ENCODE measurements at regions of chr22 and their contacts with region 1.

Region 1: DNA sequence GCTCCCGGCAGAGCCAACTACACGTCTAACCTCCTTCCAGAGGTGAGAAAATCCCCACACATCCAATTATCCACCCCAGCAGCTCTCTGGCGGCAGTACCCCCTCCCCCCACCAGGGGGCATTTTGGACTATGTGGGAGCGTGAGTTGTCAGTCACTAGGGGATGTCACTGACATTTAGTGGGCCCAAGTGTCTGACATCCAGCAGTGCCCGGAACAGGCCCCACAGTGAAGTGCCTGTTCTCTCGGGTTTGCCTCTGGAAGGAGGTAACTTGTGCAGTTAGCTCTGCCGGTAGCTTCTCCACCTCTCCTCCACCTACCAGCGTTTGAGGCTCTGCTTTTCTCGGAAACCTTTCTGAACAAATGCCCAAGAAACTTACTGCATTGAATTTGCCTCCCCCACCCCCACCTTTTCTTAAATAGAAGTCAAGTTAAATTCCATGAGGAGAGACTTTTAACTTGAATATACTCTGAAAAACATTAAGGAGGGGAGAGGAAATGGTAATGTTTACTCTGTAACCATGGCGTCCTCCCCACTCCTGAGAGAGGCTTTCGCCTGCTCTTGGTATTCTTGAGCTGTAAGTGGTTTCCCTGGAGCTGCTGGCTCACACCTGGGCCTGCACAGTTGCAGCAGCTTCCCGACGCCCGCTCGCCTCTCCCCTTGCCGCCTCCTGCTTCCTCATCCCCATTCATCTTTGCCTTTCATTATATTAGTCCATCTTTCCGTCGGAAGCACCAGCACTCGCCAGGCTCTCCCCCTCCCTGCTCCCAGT is 112.8 kb downstream of the WNT7B start:
- DNase-seq: peak; percentile 64 to 86
- H3K4me3 ChIP-seq: no peak overlapping the region
- H3K4me3 Mint-ChIP-seq: no peak overlapping the region
- H3K27ac Mint-ChIP-seq: no peak overlapping the region
- H3K4me1 ChIP-seq: no peaks in the 10 kb centered on the region
- H3K4me1 Mint-ChIP-seq: no peaks in the 10 kb centered on the region
- H3K27me3 ChIP-seq: no peaks in the 10 kb centered on the region; the same call in 1 of the 2 replicates
- H3K27me3 Mint-ChIP-seq: peaks cover 17% of the 10 kb centered on the region
- CTCF ChIP-seq: peak; percentile 89 to 90

Region 2: DNA sequence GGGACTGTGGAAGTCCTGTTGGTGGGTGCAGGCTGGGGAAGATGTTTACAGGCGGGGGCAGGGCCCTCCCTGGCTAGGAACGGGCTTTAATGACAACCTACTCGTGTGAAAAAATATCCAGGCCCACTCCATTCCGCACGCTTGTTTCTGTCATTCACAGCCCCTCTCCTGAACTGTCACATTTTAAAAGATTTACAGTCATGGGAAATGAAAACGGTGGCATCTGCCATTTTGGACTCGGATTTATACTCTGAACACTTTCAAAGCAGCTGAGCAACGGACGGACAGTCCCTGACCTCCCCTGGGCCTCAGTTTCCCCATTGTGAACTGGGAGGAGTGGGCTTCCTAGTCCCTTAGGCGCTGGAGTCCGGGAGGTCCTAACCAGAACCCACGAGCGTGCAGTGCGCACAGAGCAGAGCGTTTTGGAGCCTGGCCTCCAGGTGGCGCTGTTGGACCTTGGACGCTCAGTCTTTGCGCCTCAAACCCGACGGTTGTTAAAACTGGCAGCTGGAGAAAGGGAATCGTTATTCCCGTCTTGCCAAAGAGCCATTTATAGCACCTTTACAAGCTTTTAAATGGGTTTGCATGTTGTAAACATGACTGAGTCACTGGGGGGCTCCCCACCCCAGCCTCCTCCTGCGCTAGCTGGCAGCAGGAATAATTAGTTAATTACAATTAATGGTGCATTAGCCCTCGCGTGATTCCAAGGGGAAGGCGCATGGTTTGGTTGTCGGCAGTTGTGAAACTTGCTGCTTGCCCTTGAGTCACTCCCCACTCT is 286.2 kb before region 1 on chr22:
- CTCF ChIA-PET with region 1: interaction called, 4 read pairs
- POLR2A ChIA-PET with region 1: no interaction called
- intact Hi-C with region 1: loop called (anchors 5 kb)
- DNase-seq: peak; percentile 76 to 85
- H3K4me3 ChIP-seq: no peak overlapping the region
- H3K4me3 Mint-ChIP-seq: no peak overlapping the region
- H3K27ac Mint-ChIP-seq: no peak overlapping the region
- H3K4me1 ChIP-seq: peaks cover 17% of the 10 kb centered on the region
- H3K4me1 Mint-ChIP-seq: no peaks in the 10 kb centered on the region
- H3K27me3 ChIP-seq: no peaks in the 10 kb centered on the region
- H3K27me3 Mint-ChIP-seq: no peaks in the 10 kb centered on the region
- CTCF ChIP-seq: peak; percentile 94

Region 3: DNA sequence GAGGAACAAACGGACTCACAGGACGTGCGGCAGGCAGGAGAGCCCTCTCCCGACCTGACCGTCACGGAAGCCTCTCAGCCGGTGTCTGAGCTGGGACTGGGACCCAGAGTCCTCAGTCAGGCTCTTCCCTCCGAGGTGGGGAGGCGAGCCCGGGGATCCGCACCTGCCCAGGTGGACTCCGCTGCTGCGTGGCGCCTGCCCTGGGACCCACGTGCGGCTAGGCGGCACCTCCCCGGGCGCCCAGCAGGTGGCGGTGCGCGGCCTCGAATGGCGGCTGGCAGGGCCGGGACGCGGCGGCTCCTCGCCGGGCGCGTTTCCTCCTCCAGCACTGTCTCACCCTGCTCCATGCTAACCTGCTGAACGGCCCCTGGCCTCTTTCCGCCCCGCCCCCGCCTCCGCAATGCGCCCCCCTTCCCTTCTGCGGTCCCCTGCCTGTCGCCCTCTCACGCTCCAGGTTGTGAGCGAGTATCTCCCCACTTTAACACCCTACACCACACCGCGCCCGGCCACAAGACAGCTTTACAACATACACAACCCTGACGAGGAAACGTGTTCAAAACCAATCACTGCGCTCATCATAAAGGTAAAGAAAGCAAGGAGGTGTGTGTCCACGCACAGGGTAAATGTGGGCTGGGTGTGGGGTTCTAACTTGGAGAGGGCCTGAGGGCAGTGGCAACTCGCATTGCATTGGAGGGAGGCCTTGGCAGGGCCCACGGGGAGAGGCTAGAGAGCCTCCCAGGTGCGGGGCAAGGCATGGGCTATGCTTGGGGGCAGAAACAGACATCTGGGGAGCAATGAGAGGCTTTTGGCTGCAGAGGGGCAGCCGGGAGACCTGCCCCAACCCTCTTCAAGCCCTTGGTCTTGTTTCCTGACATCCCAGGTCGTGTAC is 218.4 kb before region 1 on chr22:
- CTCF ChIA-PET with region 1: no interaction called
- POLR2A ChIA-PET with region 1: no interaction called
- intact Hi-C with region 1: loop called (anchors 10 kb)
- DNase-seq: peak; percentile 64 to 87
- H3K4me3 ChIP-seq: no peak overlapping the region
- H3K4me3 Mint-ChIP-seq: peak overlapping the region; percentile 21
- H3K27ac Mint-ChIP-seq: no peak overlapping the region
- H3K4me1 ChIP-seq: 0 out of 2 replicates have a peak, but pooled peaks cover 4% of the 10 kb centered on the region
- H3K4me1 Mint-ChIP-seq: no peaks in the 10 kb centered on the region
- H3K27me3 ChIP-seq: no peaks in the 10 kb centered on the region
- H3K27me3 Mint-ChIP-seq: no peaks in the 10 kb centered on the region
- CTCF ChIP-seq: peak; percentile 50 to 94

Region 4: GRCh38 chr22:45968751-45969413 is 104.7 kb after region 1 on chr22:
- CTCF ChIA-PET with region 1: interaction called, 11 read pairs
- POLR2A ChIA-PET with region 1: no interaction called
- intact Hi-C with region 1: loop called (anchors 2 kb)
- DNase-seq: no peak
- H3K4me3 ChIP-seq: no peak overlapping the region
- H3K4me3 Mint-ChIP-seq: no peak overlapping the region
- H3K27ac Mint-ChIP-seq: no peak overlapping the region
- H3K4me1 ChIP-seq: no peaks in the 10 kb centered on the region
- H3K4me1 Mint-ChIP-seq: no peaks in the 10 kb centered on the region
- H3K27me3 ChIP-seq: no peaks in the 10 kb centered on the region
- H3K27me3 Mint-ChIP-seq: peaks cover 3% of the 10 kb centered on the region
- CTCF ChIP-seq: no peak

Region 5: GRCh38 chr22:45977003-45977411 is 112.8 kb after region 1 on chr22 and contains the start of gene WNT7B:
- CTCF ChIA-PET with region 1: interaction called, 17 read pairs
- POLR2A ChIA-PET with region 1: no interaction called
- intact Hi-C with region 1: no loop called
- DNase-seq: peak in 1 of 2 experiments; percentile 42
- H3K4me3 ChIP-seq: peak within 1 kb of the TSS; percentile 30
- H3K4me3 Mint-ChIP-seq: peak within 1 kb of the TSS; percentile 49
- H3K27ac Mint-ChIP-seq: no peak within 1 kb of the TSS
- H3K4me1 ChIP-seq: peaks cover 29% of the 10 kb centered on the region
- H3K4me1 Mint-ChIP-seq: no peaks in the 10 kb centered on the region
- H3K27me3 ChIP-seq: peaks cover 6% of the 10 kb centered on the region; the same call in 1 of the 2 replicates
- H3K27me3 Mint-ChIP-seq: peaks cover 3% of the 10 kb centered on the region
- CTCF ChIP-seq: no peak
- total RNA-seq, gene WNT7B: 0.57 and 0.77 TPM in 2 replicates

Region 6: DNA sequence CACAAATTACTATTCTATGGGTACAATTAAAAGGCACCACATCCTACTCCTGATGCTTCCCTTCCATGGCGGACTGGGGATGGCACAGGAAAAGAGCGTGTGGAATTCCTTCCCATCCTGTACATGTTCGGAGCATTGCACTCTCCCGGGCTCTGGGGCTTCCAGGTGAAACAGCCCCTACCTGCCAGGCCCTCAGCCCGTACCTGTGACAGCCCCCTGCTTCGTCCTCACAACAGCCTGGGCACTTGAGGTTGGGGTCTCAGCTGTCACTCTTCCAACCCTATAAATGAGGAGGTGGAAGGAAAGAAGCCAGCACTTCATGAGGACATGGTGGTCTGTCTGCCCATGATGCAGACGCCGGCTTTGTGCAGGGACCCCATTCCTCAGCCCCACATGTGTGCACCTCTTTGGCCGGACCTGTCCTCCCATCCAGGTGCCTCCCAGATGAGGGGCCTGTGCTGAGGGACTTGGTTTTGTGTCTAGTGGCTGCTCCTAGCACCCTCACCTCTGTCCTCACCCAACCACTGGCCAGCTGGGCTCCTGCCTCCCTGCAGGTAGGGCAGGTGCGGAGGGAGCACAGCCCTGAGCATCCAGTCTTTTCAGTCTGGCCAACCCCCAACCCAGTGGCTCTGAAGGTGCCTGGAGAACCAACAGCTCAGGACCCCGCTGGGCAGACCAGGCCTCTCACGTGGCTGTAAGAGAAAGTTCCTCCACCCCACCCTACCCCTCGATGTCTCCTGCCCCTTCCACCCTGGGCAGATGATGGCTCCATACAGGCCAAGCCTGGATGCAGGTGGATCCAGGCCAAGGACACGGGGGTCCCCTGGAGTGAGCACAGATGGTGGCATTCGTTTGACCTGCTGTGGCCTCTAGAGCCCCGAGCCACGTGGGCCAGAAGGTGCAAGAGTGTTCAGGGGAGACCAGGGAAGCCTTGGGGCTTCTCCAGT is 136.2 kb after region 1 on chr22:
- CTCF ChIA-PET with region 1: no interaction called
- POLR2A ChIA-PET with region 1: no interaction called
- intact Hi-C with region 1: no loop called
- DNase-seq: no peak
- H3K4me3 ChIP-seq: no peak overlapping the region
- H3K4me3 Mint-ChIP-seq: no peak overlapping the region
- H3K27ac Mint-ChIP-seq: no peak overlapping the region
- H3K4me1 ChIP-seq: no peaks in the 10 kb centered on the region
- H3K4me1 Mint-ChIP-seq: no peaks in the 10 kb centered on the region
- H3K27me3 ChIP-seq: no peaks in the 10 kb centered on the region
- H3K27me3 Mint-ChIP-seq: no peaks in the 10 kb centered on the region
- CTCF ChIP-seq: no peak

Measured in Caco-2 (cell line).